Endothelial cell of umbilical vein (primary cell): ENCODE measurements at regions of chr15 and their contacts with region 1.

Region 1: GRCh38 chr15:98581715-98582114 is 66.6 kb upstream of the IGF1R start:
- DNase-seq: no peak
- H3K4me3 ChIP-seq: no peak overlapping the region
- H3K27ac ChIP-seq: no peak overlapping the region
- H3K4me1 ChIP-seq: no peaks in the 10 kb centered on the region
- H3K27me3 ChIP-seq: peaks cover 3 to 19% of the 10 kb centered on the region in 2 experiments
- CTCF ChIP-seq: no peak
- POLR2A ChIP-seq: no peak

Region 2: DNA sequence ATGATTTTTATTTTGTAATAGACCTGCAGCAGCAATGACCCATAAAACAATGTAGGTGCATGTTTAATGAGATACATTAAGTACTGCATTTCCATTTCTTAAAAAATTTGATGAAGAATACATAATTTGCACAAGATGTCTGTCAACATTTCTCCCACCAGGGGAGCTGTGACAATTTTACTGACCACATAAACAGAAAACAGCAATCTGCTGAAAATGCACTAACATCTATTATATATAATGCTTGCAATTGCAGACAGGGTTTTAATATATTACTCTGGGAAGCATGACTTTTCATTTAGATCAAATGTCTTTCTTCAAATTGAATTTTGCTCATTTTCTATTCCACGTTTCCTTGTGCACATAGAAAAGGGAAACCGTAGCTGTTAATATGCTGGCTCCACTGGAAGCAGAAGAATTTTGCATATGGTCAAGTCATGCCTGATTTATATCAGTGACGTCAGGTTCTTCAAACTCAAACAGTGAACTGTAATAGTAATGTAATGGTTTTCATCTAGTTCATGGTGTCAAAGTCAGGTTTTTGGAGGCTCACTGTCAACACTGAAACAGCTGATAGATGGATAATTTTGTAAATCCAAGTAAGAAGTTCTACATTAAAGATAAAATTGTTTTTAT is 13.2 kb before region 1 on chr15:
- CTCF ChIA-PET with region 1: interaction called, 10 read pairs
- POLR2A ChIA-PET with region 1: no interaction called
- dilution Hi-C with region 1: no loop called
- intact Hi-C with region 1: no loop called
- DNase-seq: no peak
- H3K4me3 ChIP-seq: no peak overlapping the region
- H3K27ac ChIP-seq: no peak overlapping the region
- H3K4me1 ChIP-seq: no peaks in the 10 kb centered on the region
- H3K27me3 ChIP-seq: peaks cover 0 to 2% of the 10 kb centered on the region in 2 experiments
- CTCF ChIP-seq: peak; percentile 7 to 8
- POLR2A ChIP-seq: no peak

Region 3: DNA sequence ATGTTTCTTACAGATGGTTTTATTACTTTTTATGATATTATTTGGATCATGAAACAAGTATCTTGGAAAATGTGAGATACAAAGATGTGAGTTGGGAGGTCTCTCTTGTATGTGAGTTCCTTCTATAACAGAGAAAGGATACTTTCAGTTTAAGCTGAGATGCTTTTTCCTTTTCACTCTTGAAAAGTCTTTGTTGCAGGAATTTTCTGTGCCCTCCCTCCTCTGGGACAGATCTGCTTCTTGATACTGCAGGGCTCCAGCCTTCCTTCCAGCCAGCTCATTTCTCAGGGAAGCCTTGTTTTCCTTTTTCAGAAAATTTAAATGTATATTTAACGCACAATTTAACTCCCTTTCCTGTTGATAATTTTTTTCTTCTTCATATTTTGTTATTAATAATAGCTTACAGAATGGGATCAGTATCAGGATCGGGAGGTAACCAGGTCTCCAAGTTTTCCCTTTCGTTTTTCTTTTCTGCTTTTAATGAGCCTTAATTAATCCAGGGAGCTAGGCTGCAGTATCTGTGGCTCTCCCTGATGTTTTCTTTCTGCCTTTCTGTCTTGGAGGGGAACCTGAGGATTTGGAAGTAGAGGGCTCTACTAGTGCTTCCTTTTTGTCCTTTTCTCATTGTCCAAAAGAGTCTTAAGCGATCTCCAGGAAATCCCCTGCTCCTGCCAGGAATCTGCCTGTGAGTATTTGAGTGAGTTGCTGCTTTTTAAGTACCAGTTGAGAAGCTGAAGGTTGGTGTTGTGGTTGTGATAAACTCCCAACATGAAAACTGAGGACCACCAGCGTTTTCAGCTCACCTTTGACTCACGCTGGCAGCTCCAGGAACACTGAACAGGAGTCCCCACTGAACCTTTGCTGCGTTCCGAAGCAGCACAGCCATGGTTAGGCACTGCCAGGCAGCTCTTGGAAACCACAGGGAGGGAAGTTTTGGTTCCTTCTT is 172.3 kb after region 1 on chr15:
- CTCF ChIA-PET with region 1: no interaction called
- POLR2A ChIA-PET with region 1: no interaction called
- dilution Hi-C with region 1: no loop called
- intact Hi-C with region 1: no loop called
- DNase-seq: peak; percentile 73
- H3K4me3 ChIP-seq: peak overlapping the region; percentile 25 to 60 (median 34)
- H3K27ac ChIP-seq: peak overlapping the region; percentile 30
- H3K4me1 ChIP-seq: peaks cover 12% of the 10 kb centered on the region
- H3K27me3 ChIP-seq: no peaks in the 10 kb centered on the region
- CTCF ChIP-seq: no peak
- POLR2A ChIP-seq: no peak